HepG2 (cell line): ENCODE measurements at regions of chr4 and their contacts with region 1.

Region 1: DNA sequence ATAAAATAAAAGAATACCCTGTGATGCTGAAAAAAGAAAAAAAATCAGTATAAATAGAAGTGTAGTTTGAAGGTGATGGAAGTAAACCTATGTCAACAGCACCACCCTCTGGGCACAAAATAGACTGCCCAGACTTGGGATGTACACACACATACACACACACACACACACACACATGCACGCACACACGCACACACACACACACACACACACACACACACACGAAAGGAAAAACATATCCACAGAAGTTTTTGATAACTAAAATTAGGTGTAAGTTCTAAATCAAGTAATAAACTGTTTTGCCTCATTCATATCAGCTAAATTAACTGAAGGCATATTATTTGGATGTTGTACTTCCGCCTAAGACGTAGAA is 40.5 kb downstream of the ANXA5 start:
- DNase-seq: peak; percentile 50
- ATAC-seq: peak; percentile 80
- H3K4me3 ChIP-seq: no peak overlapping the region
- H3K27ac ChIP-seq: no peak overlapping the region
- H3K4me1 ChIP-seq: no peaks in the 10 kb centered on the region
- H3K27me3 ChIP-seq: no peaks in the 10 kb centered on the region
- CTCF ChIP-seq: peak; percentile 64
- EP300 ChIP-seq: no peak
- POLR2A ChIP-seq: no peak
- RAD21 ChIP-seq: 0 out of 2 replicates have a peak, but pooled peaks have one; percentile 23

Region 2: DNA sequence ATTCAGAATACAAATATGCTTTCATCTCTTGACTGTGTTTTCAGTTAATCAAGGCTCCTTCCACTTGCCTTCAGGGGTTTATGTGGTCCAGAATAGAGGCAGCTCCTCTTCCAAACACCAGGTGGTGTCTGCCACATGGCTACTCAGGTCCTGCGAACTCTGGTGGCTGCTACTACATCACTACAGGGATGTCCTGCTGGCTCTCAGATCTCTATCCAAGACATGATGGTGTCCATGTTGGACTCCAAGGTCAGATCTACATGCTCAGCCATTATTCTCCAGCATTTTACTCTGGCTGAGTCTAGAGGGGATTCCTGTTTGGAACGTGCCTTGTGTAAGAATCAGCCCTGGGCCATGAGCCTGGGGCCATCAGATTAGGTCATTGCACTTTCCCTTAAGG is 378.6 kb before region 1 on chr4:
- CTCF ChIA-PET with region 1: interaction called, 4 read pairs
- POLR2A ChIA-PET with region 1: no interaction called
- in situ Hi-C with region 1: no loop called
- intact Hi-C with region 1: loop called (anchors 10 kb)
- DNase-seq: peak; percentile 27
- ATAC-seq: peak; percentile 100
- H3K4me3 ChIP-seq: no peak overlapping the region
- H3K27ac ChIP-seq: no peak overlapping the region
- H3K4me1 ChIP-seq: no peaks in the 10 kb centered on the region
- H3K27me3 ChIP-seq: no peaks in the 10 kb centered on the region
- CTCF ChIP-seq: peak; percentile 46
- EP300 ChIP-seq: no peak
- POLR2A ChIP-seq: no peak
- RAD21 ChIP-seq: peak; percentile 53

Region 3: DNA sequence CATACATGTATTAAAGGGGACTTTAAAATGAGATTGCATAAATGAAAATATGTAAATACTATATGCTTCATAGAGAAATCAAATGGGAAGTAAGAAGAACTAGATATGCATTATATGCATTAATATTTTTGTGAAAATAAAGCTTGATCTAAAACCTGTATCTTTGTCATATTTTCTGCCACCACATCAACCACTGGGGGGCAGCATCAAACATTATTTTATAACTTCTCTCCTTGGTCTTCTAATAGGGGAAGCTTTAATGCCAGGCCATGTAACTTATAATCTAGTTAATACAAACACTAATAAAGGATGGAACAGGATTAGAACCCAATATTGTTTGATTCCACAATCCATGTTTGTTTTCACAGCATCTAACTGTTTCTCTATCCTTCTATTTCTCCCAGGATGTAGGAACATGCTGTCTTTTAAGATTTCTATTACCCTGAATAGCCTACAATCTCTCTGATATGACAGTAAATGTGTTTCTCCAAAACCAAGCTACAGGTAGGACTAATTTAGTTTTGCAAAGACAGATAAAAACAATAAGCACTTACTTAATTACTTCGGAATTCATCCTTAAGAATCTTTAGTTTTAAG is 285.4 kb before region 1 on chr4:
- CTCF ChIA-PET with region 1: interaction called, 15 read pairs
- POLR2A ChIA-PET with region 1: no interaction called
- in situ Hi-C with region 1: loop called (anchors 10 kb)
- intact Hi-C with region 1: loop called (anchors 2 kb)
- DNase-seq: peak; percentile 17
- ATAC-seq: peak; percentile 37; the same call in 1 of the 3 replicates
- H3K4me3 ChIP-seq: no peak overlapping the region
- H3K27ac ChIP-seq: no peak overlapping the region
- H3K4me1 ChIP-seq: no peaks in the 10 kb centered on the region
- H3K27me3 ChIP-seq: no peaks in the 10 kb centered on the region
- CTCF ChIP-seq: peak; percentile 47
- EP300 ChIP-seq: no peak
- POLR2A ChIP-seq: no peak
- RAD21 ChIP-seq: no peak

Region 4: DNA sequence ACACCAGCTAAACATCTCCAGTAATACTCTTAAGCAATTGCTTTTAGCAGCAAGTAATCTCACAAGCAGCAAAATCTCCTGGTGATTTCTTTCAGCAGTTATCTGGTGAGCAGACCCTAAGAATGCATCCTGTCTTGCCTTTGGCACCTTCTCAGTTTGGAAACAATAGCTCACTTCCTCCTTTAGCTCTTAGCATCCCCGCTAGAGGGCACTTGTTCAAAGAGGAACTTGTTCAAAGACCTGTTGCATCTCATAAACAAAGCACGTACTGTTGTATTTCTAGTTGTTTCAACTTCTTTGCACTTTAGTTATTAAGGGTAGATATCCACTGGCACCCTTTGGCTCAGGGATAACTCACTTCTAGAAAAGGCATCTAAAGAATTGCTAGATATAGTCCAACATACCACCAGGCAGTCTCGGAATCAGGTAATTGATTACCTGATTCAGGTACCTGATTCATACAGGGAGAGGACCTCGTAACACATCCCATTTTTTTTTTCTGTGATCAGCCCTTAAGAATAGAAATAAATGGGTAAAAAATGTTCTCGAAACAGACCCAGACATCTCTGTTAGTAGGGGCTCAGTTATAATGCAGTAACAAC is 193.5 kb before region 1 on chr4:
- CTCF ChIA-PET with region 1: interaction called, 11 read pairs
- POLR2A ChIA-PET with region 1: no interaction called
- in situ Hi-C with region 1: loop called (anchors 10 kb)
- intact Hi-C with region 1: loop called (anchors 1 kb)
- DNase-seq: peak; percentile 57
- ATAC-seq: peak; percentile 80
- H3K4me3 ChIP-seq: no peak overlapping the region
- H3K27ac ChIP-seq: no peak overlapping the region
- H3K4me1 ChIP-seq: no peaks in the 10 kb centered on the region
- H3K27me3 ChIP-seq: no peaks in the 10 kb centered on the region
- CTCF ChIP-seq: peak; percentile 71
- EP300 ChIP-seq: no peak
- POLR2A ChIP-seq: no peak
- RAD21 ChIP-seq: no peak

Region 5: DNA sequence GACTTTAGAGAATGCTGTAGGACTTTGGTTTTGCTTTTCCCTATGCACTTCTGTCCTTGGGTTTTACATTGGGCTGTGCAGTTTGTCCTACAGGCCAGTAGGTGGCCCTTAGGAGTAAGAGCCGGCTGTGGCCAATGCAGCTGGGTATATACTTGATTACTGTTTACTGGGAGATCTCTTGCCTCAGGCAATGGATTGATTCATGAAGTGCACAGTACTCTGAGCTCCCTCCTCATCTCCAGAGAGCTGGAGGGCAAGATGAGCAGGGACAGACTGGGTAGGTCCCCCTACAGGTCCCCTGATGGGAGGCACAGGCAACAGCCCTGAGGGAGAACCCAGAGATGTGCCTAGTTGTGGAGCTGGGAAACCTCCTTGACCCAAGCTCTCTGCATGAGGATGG is 171.6 kb before region 1 on chr4:
- CTCF ChIA-PET with region 1: interaction called, 10 read pairs
- POLR2A ChIA-PET with region 1: no interaction called
- in situ Hi-C with region 1: no loop called
- intact Hi-C with region 1: loop called (anchors 1 kb)
- DNase-seq: peak; percentile 36
- ATAC-seq: peak; percentile 98
- H3K4me3 ChIP-seq: no peak overlapping the region
- H3K27ac ChIP-seq: no peak overlapping the region
- H3K4me1 ChIP-seq: no peaks in the 10 kb centered on the region
- H3K27me3 ChIP-seq: no peaks in the 10 kb centered on the region; a peak in 1 of 5 replicates
- CTCF ChIP-seq: peak; percentile 74
- EP300 ChIP-seq: no peak
- POLR2A ChIP-seq: no peak
- RAD21 ChIP-seq: peak; percentile 27; the same call in 1 of the 2 replicates

Region 6: GRCh38 chr4:121642292-121642691 is 14.0 kb before region 1 on chr4:
- CTCF ChIA-PET with region 1: no interaction called
- POLR2A ChIA-PET with region 1: no interaction called
- in situ Hi-C with region 1: no loop called
- intact Hi-C with region 1: no loop called
- DNase-seq: no peak
- ATAC-seq: no peak
- H3K4me3 ChIP-seq: no peak overlapping the region
- H3K27ac ChIP-seq: no peak overlapping the region
- H3K4me1 ChIP-seq: peaks cover 15% of the 10 kb centered on the region
- H3K27me3 ChIP-seq: no peaks in the 10 kb centered on the region
- CTCF ChIP-seq: no peak
- EP300 ChIP-seq: no peak
- POLR2A ChIP-seq: no peak
- RAD21 ChIP-seq: no peak

Region 7: GRCh38 chr4:121726642-121727268 is 70.5 kb after region 1 on chr4:
- CTCF ChIA-PET with region 1: no interaction called
- POLR2A ChIA-PET with region 1: no interaction called
- in situ Hi-C with region 1: no loop called
- intact Hi-C with region 1: loop called (anchors 2 kb)
- DNase-seq: peak; percentile 64
- ATAC-seq: peak; percentile 92
- H3K4me3 ChIP-seq: no peak overlapping the region
- H3K27ac ChIP-seq: no peak overlapping the region
- H3K4me1 ChIP-seq: no peaks in the 10 kb centered on the region
- H3K27me3 ChIP-seq: peaks cover 0 to 4% of the 10 kb centered on the region in 2 experiments; a peak in 2 of 5 replicates
- CTCF ChIP-seq: peak; percentile 76
- EP300 ChIP-seq: no peak
- POLR2A ChIP-seq: no peak
- RAD21 ChIP-seq: 0 out of 2 replicates have a peak, but pooled peaks have one; percentile 34

Region 8: DNA sequence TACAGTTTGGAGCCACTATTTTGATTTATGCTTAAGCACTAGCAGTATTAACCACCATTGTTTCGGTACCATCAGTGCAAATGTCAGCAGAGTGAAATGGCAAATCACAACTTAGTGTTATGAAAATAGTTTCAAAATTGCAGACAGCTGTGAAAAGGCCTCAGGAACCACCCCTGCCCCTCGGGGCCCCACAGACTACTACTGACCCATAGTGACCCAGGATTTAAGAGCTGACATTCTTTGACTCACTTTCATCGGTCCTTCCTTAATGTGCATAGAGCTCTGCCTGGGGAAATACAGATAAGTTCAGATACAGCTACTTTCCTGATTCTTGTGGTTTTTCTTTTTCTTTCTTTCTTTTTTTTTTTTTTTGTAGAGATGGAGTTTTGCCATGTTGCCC is 217.3 kb after region 1 on chr4:
- CTCF ChIA-PET with region 1: no interaction called
- POLR2A ChIA-PET with region 1: no interaction called
- in situ Hi-C with region 1: no loop called
- intact Hi-C with region 1: no loop called
- DNase-seq: no peak
- ATAC-seq: no peak
- H3K4me3 ChIP-seq: no peak overlapping the region
- H3K27ac ChIP-seq: no peak overlapping the region
- H3K4me1 ChIP-seq: peaks cover 14% of the 10 kb centered on the region
- H3K27me3 ChIP-seq: no peaks in the 10 kb centered on the region; a peak in 1 of 5 replicates
- CTCF ChIP-seq: no peak
- EP300 ChIP-seq: no peak
- POLR2A ChIP-seq: no peak
- RAD21 ChIP-seq: no peak